ENCODE measurements at regions of chr17 and their contacts with region 1.

Region 1: DNA sequence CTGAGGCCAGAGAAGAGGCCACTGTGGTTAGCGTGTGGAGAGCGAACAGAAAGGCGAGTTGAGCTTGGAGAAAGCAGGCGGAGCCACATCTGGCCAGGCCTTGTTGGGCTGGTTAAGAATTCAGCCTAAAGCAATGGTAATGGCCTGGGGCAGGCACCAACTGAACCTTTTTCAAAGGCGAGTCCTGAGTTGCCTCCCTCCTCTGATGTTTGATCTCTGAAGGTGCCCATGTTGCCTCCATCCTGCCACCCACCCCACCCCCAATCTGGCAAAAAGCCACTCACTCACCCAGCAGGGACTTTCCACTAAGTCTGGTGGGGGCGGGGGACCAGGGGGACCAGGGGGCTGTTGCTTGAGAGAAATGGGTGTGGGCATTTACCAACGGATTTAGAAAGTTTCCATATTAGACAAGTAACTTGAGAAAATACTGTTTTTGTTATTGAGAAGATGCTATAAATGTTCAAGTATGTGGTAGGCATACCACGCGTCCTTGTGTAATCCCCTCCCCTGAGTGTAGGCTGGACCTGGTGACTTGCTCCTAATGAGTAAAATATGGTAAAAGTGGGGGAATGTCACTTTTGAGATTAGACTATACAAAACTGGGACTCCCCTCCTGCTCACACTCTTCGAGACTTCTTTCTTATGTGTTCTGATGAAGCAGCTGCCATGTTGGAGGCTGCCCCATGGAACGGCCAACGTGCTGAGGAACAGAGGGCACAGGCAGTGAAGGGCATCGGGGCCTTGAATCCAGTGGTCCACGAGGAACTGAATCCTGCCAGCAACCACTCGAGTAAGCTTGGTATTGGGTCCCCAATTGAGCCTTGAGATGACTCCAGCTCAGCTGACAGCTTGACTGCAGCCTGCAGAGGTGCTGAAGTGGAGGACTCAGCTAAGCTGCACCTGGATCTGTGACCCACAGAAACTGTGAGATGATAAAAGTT is 29.9 kb upstream of the TNS4 start:
- DNase-seq: no peak
- H3K4me3 ChIP-seq: no peak overlapping the region
- H3K27ac ChIP-seq: no peak overlapping the region
- H3K4me1 ChIP-seq: peaks cover 0 to 7% of the 10 kb centered on the region in 2 experiments; a peak in 1 of 4 replicates
- H3K27me3 ChIP-seq: no peaks in the 10 kb centered on the region
- CTCF ChIP-seq: no peak
- EP300 ChIP-seq: no peak
- RAD21 ChIP-seq: no peak

Region 2: DNA sequence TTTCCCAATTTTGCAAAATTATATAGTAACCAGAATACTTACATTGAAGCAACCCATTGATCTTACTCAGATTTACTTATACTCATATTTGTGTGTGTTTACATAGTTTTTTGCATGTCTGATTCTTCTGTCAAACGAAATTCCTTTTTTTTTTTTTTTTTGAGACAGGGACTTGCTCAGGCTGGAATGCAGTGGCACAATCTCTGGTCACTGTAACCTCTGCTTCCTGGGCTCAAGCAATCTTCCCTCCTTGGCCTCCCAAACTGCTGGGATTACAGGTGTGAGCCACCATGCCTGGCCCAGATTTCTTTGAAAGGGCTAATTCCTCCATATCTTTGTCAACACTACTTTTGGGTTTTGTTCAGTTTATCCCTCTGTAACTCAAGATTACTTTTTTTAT is 143.6 kb before region 1 on chr17:
- CTCF ChIA-PET with region 1: interaction called, 12 read pairs
- POLR2A ChIA-PET with region 1: no interaction called
- DNase-seq: no peak
- H3K4me3 ChIP-seq: no peak overlapping the region
- H3K27ac ChIP-seq: no peak overlapping the region
- H3K4me1 ChIP-seq: no peaks in the 10 kb centered on the region
- H3K27me3 ChIP-seq: no peaks in the 10 kb centered on the region
- CTCF ChIP-seq: no peak
- EP300 ChIP-seq: no peak
- RAD21 ChIP-seq: no peak

Region 3: GRCh38 chr17:40417609-40418427 is 113.5 kb before region 1 on chr17 and contains the start of gene TOP2A:
- CTCF ChIA-PET with region 1: interaction called, 36 read pairs
- POLR2A ChIA-PET with region 1: no interaction called
- DNase-seq: peak; percentile 97
- H3K4me3 ChIP-seq: peak within 1 kb of the TSS; percentile 64 to 80
- H3K27ac ChIP-seq: peak within 1 kb of the TSS; percentile 50 to 81
- H3K4me1 ChIP-seq: peaks cover 0 to 10% of the 10 kb centered on the region in 2 experiments; a peak in 2 of 4 replicates
- H3K27me3 ChIP-seq: no peaks in the 10 kb centered on the region
- CTCF ChIP-seq: no peak
- EP300 ChIP-seq: no peak
- RAD21 ChIP-seq: no peak
- polyA plus RNA-seq, gene TOP2A: 20.6 and 23.2 TPM in 2 replicates

Region 4: GRCh38 chr17:40457964-40458791 is 73.1 kb before region 1 on chr17:
- CTCF ChIA-PET with region 1: interaction called, 332 read pairs
- POLR2A ChIA-PET with region 1: interaction called, 5 read pairs
- DNase-seq: peak; percentile 73
- H3K4me3 ChIP-seq: peak overlapping the region in 1 of 2 experiments; percentile 17; a peak in 1 of 4 replicates
- H3K27ac ChIP-seq: peak overlapping the region; percentile 68 to 92
- H3K4me1 ChIP-seq: peaks cover 33 to 84% of the 10 kb centered on the region in 2 experiments
- H3K27me3 ChIP-seq: no peaks in the 10 kb centered on the region
- CTCF ChIP-seq: no peak
- EP300 ChIP-seq: peak; percentile 80 to 95; a peak in 3 of 4 replicates
- RAD21 ChIP-seq: no peak

Region 5: GRCh38 chr17:40499551-40500174 is 31.7 kb before region 1 on chr17:
- CTCF ChIA-PET with region 1: interaction called, 37 read pairs
- POLR2A ChIA-PET with region 1: interaction called, 3 read pairs
- DNase-seq: peak; percentile 84
- H3K4me3 ChIP-seq: peak overlapping the region in 1 of 2 experiments; percentile 13; a peak in 1 of 4 replicates
- H3K27ac ChIP-seq: 0 out of 4 replicates have a peak overlapping the region, but pooled peaks of 1 of the 2 experiments have one; percentile 18
- H3K4me1 ChIP-seq: peaks cover 5 to 11% of the 10 kb centered on the region in 2 experiments; a peak in 1 of 4 replicates
- H3K27me3 ChIP-seq: no peaks in the 10 kb centered on the region
- CTCF ChIP-seq: no peak
- EP300 ChIP-seq: no peak
- RAD21 ChIP-seq: no peak

Region 6: GRCh38 chr17:40753804-40754203 is 222.5 kb after region 1 on chr17:
- CTCF ChIA-PET with region 1: no interaction called
- POLR2A ChIA-PET with region 1: no interaction called
- DNase-seq: no peak
- H3K4me3 ChIP-seq: no peak overlapping the region
- H3K27ac ChIP-seq: no peak overlapping the region
- H3K4me1 ChIP-seq: no peaks in the 10 kb centered on the region
- H3K27me3 ChIP-seq: peaks cover 37% of the 10 kb centered on the region; the same call in 1 of the 2 replicates
- CTCF ChIP-seq: no peak
- EP300 ChIP-seq: no peak
- RAD21 ChIP-seq: no peak